SK-N-SH (cell line): ENCODE measurements at regions of chr17 and their contacts with region 1.

Region 1: DNA sequence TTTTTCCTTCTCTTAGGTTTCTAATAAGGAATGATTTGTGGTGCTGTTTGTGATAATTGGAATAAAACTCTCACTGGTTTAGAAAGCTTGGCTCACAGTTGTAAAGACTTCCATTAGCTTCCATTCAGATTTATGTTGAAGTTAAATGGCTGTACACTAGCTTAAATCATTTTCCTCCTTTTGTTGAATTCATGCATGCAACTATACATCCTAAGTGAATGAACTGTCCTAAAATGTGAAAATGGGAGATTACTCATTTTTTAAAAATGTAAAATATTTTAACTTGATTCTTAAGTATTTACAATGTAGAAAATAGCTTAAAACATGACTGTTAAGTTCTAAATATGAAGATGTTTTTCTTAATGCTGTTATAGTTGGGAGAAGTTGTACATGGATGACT is 15.2 kb downstream of the PRKCA start:
- DNase-seq: no peak
- H3K4me3 ChIP-seq: no peak overlapping the region
- H3K27ac ChIP-seq: peak overlapping the region; percentile 39 to 57
- H3K4me1 ChIP-seq: peaks cover 14 to 17% of the 10 kb centered on the region in 2 experiments; a peak in 3 of 4 replicates
- H3K27me3 ChIP-seq: no peaks in the 10 kb centered on the region
- CTCF ChIP-seq: no peak
- EP300 ChIP-seq: no peak
- RAD21 ChIP-seq: no peak

Region 2: DNA sequence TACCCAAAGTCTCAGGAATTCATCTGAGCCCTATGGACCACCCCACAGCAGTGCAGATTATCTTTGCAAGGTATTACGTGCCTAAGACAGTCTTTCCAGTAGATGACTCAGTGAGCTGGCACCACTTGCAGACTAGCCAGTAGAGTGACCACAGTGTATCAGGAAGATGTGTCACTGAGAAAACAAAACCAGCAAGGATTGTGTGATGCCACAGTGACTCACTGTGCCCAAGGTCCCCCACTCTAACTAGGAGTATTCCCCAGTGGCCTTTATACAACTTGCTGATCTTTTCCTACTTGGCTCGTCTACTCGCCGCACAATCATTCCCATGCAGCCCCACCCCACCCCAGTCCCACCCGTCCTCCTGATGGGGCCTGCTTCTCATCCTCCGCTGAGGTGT is 42.0 kb before region 1 on chr17:
- CTCF ChIA-PET with region 1: no interaction called
- POLR2A ChIA-PET with region 1: no interaction called
- DNase-seq: no peak
- H3K4me3 ChIP-seq: no peak overlapping the region; a peak in 1 of 4 replicates
- H3K27ac ChIP-seq: peak overlapping the region in 1 of 2 experiments; percentile 80; a peak in 2 of 4 replicates
- H3K4me1 ChIP-seq: peaks cover 3 to 37% of the 10 kb centered on the region in 2 experiments; a peak in 3 of 4 replicates
- H3K27me3 ChIP-seq: no peaks in the 10 kb centered on the region
- CTCF ChIP-seq: peak; percentile 38
- EP300 ChIP-seq: peak in 1 of 2 experiments; percentile 96; a peak in 2 of 4 replicates
- RAD21 ChIP-seq: no peak

Region 3: DNA sequence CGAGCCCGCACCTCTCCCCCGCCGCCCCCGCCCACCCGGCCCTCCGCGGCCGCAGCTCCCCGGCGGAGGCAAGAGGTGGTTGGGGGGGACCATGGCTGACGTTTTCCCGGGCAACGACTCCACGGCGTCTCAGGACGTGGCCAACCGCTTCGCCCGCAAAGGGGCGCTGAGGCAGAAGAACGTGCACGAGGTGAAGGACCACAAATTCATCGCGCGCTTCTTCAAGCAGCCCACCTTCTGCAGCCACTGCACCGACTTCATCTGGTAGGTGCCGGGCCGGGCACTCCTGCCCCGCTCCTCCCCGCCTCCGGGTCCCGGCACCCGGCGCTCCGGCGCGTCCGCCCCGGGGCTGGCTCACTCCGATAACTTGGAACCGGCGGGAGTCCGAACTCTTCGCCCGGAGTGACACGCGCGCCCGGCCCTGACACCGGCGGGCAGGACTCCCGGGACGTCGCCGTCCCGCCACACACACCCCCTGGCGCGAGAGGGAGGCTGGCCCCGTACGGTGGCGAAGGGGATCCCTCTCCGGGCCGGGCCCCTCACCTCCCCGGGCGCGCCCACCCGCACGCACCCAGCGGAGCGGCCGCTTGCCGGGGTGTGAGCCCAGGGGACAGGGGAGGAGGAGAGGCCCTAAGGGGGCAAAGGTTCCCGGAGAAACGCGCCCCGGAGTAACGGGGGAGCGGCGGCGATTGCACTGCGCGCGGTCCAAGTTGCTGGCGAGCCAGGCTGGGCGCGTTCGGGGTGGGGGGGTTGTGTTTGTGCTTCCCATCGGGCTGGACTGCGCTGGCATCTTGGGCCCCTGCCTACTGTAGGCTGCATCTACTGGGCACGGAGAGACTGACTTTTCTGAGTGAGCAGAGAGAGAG is 14.6 kb before region 1 on chr17:
- CTCF ChIA-PET with region 1: interaction called, 10 read pairs
- POLR2A ChIA-PET with region 1: interaction called, 4 read pairs
- DNase-seq: peak; percentile 80
- H3K4me3 ChIP-seq: peak overlapping the region; percentile 51 to 93
- H3K27ac ChIP-seq: peak overlapping the region; percentile 71 to 86
- H3K4me1 ChIP-seq: peaks cover 16 to 33% of the 10 kb centered on the region in 2 experiments
- H3K27me3 ChIP-seq: no peaks in the 10 kb centered on the region
- CTCF ChIP-seq: no peak; the same call in 1 of the 2 replicates
- EP300 ChIP-seq: no peak
- RAD21 ChIP-seq: peak; percentile 35

Region 4: DNA sequence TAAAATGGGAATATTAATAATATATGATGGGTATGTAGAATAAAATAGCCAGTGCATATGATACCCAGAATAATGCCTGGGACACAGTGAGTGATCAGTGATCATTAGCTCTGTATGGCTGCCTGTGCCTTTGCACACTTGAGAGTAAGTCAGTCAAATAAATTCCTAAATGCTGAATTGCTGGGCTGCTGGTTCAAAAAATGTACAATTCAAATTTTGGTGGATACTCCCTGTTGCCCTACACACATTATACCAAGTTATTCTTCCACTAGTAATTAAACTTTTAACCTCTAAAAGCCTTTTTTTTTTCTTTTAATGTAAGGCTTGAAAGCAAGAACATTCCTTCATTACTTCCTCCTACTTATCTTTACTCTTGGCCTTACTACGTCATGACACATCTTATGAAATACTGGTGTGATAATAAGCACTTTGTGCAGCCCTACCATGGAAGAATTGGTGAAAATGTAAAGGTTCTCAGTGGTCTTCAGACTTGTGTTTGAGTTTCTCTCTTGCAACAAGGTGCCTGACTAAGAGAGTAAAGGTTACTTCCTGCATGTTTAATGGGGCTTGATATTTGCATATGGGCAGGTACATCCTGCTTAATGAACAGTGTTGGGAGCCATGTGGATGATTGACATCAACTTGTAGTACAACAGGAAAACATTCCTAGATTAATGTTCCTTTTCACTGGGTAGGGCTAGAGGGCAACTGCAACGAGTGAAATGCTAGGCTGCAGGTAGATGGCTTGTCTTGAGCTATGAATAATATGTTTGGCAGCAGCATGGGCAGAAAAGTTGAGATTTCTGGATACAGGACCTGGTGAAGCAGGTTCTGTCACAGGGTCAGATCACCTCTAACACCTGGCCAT is 69.1 kb after region 1 on chr17:
- CTCF ChIA-PET with region 1: no interaction called
- POLR2A ChIA-PET with region 1: no interaction called
- DNase-seq: no peak
- H3K4me3 ChIP-seq: no peak overlapping the region
- H3K27ac ChIP-seq: no peak overlapping the region
- H3K4me1 ChIP-seq: peaks cover 0 to 12% of the 10 kb centered on the region in 2 experiments; a peak in 2 of 4 replicates
- H3K27me3 ChIP-seq: no peaks in the 10 kb centered on the region
- CTCF ChIP-seq: no peak
- EP300 ChIP-seq: no peak
- RAD21 ChIP-seq: no peak